ENCODE measurements at regions of chr9 and their contacts with region 1.

Region 1: GRCh38 chr9:114681594-114682332 is at the start of gene TEX48:
- DNase-seq: peak; percentile 78
- ATAC-seq: peak; percentile 93
- H3K4me3 ChIP-seq: no peak within 1 kb of the TSS
- H3K27ac ChIP-seq: no peak within 1 kb of the TSS
- H3K4me1 ChIP-seq: peaks cover 13 to 22% of the 10 kb centered on the region in 2 experiments; a peak in 3 of 4 replicates
- H3K27me3 ChIP-seq: no peaks in the 10 kb centered on the region
- CTCF ChIP-seq: peak; percentile 79 to 90 (median 83)
- POLR2A ChIP-seq: no peak
- RAD21 ChIP-seq: peak; percentile 91
- total RNA-seq, gene TEX48: not detected

Region 2: GRCh38 chr9:114405294-114406034 is 276.3 kb before region 1 on chr9:
- CTCF ChIA-PET with region 1: interaction called, 17 read pairs
- POLR2A ChIA-PET with region 1: no interaction called
- RAD21 ChIA-PET with region 1: no interaction called
- intact Hi-C with region 1: no loop called
- DNase-seq: peak; percentile 48
- ATAC-seq: peak; percentile 98
- H3K4me3 ChIP-seq: no peak overlapping the region
- H3K27ac ChIP-seq: no peak overlapping the region
- H3K4me1 ChIP-seq: no peaks in the 10 kb centered on the region
- H3K27me3 ChIP-seq: no peaks in the 10 kb centered on the region
- CTCF ChIP-seq: peak; percentile 78 to 81 (median 80)
- POLR2A ChIP-seq: no peak
- RAD21 ChIP-seq: peak; percentile 93

Region 3: GRCh38 chr9:114738581-114739316 is 57.0 kb after region 1 on chr9:
- CTCF ChIA-PET with region 1: interaction called, 11 read pairs
- POLR2A ChIA-PET with region 1: no interaction called
- RAD21 ChIA-PET with region 1: no interaction called
- intact Hi-C with region 1: loop called (anchors 2 kb)
- DNase-seq: peak; percentile 63
- ATAC-seq: peak; percentile 96
- H3K4me3 ChIP-seq: no peak overlapping the region
- H3K27ac ChIP-seq: no peak overlapping the region
- H3K4me1 ChIP-seq: peaks cover 0 to 5% of the 10 kb centered on the region in 2 experiments; a peak in 1 of 4 replicates
- H3K27me3 ChIP-seq: 0 out of 2 replicates have a peak, but pooled peaks cover 5% of the 10 kb centered on the region
- CTCF ChIP-seq: peak; percentile 78 to 91 (median 89)
- POLR2A ChIP-seq: no peak
- RAD21 ChIP-seq: peak; percentile 95

Region 4: DNA sequence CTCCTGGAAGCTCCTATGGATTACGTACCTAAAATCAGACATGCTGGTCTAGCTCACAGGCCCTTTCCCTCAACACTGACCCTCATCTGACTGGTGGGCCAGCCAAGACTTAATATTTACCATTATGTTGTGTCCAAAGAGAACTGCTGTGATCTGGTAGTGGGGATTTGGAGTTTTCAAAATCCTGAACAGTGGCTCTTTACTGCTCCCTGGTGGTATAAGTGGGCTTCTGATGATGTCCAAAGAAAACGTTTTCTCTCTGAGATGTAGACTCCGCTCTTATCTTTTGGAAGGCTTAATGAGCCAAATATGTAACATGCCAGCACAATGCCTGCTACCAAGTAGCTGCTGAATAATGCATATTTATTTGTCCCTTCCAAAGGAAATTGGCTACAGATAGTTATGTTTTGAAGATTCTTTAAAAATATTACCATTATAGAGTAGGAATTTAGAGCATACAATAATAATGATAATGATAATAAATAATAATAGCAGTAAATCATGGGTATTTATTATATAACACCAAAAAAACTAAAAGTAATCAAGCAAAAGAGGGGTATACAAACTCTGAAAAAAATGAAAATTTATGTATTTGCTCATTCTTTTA is 842.8 kb after region 1 on chr9:
- CTCF ChIA-PET with region 1: no interaction called
- POLR2A ChIA-PET with region 1: no interaction called
- RAD21 ChIA-PET with region 1: no interaction called
- intact Hi-C with region 1: loop called (anchors 5 kb)
- DNase-seq: peak; percentile 47
- ATAC-seq: peak; percentile 86
- H3K4me3 ChIP-seq: no peak overlapping the region
- H3K27ac ChIP-seq: no peak overlapping the region
- H3K4me1 ChIP-seq: no peaks in the 10 kb centered on the region
- H3K27me3 ChIP-seq: 0 out of 2 replicates have a peak, but pooled peaks cover 3% of the 10 kb centered on the region
- CTCF ChIP-seq: peak; percentile 66 to 77 (median 71); a peak in 5 of 6 replicates
- POLR2A ChIP-seq: no peak
- RAD21 ChIP-seq: peak; percentile 91

Measured in HCT116 (cell line).